Heart left ventricle (tissue), 16 donors: ENCODE measurements at regions of chr4 and their contacts with region 1.

Region 1: GRCh38 chr4:182938205-182938645 is 21.0 kb upstream of the DCTD start:
- DNase-seq: peak; percentile 63 to 85 (median 71)
- ATAC-seq: peak; percentile 86 to 99 (median 98)
- H3K4me3 ChIP-seq: no peak overlapping the region
- H3K27ac ChIP-seq: no peak overlapping the region
- H3K4me1 ChIP-seq: no peaks in the 10 kb centered on the region
- H3K27me3 ChIP-seq: no peaks in the 10 kb centered on the region
- CTCF ChIP-seq: peak; percentile 79 to 96 (median 92)
- POLR2A ChIP-seq: no peak

Region 2: GRCh38 chr4:183059797-183060196 is 121.6 kb after region 1 on chr4:
- intact Hi-C with region 1: loop called in 1 of 10 experiments (anchors 10 kb)
- DNase-seq: no peak
- ATAC-seq: no peak
- H3K4me3 ChIP-seq: no peak overlapping the region
- H3K27ac ChIP-seq: no peak overlapping the region
- H3K4me1 ChIP-seq: peaks cover 0 to 7% (median 0%) of the 10 kb centered on the region in 12 donors
- H3K27me3 ChIP-seq: no peaks in the 10 kb centered on the region
- CTCF ChIP-seq: no peak
- POLR2A ChIP-seq: no peak

Region 3: DNA sequence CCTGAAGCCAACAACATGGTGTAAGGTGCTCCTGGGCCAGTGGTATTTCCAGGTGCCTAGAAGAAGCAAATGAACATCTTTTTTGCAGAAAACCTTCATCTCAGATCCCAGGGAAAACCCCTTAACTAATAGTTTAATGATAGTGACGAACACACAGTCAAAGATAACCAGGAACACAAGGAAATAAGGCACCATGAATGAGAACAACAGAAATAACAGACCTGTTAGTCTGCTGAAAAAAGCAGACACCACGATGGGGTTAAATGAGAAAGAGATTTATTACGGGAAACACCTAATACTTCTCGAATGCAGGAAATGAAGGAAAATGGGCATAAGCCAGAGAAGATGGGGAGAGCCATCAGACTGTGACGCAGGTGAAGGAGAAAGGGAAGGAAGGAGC is 130.3 kb after region 1 on chr4:
- intact Hi-C with region 1: loop called in 9 of 10 experiments (anchors 1 to 10 kb)
- DNase-seq: no peak
- ATAC-seq: no peak
- H3K4me3 ChIP-seq: no peak overlapping the region
- H3K27ac ChIP-seq: no peak overlapping the region
- H3K4me1 ChIP-seq: peaks cover 0 to 10% (median 0%) of the 10 kb centered on the region in 12 donors
- H3K27me3 ChIP-seq: no peaks in the 10 kb centered on the region
- CTCF ChIP-seq: no peak
- POLR2A ChIP-seq: no peak

Region 4: DNA sequence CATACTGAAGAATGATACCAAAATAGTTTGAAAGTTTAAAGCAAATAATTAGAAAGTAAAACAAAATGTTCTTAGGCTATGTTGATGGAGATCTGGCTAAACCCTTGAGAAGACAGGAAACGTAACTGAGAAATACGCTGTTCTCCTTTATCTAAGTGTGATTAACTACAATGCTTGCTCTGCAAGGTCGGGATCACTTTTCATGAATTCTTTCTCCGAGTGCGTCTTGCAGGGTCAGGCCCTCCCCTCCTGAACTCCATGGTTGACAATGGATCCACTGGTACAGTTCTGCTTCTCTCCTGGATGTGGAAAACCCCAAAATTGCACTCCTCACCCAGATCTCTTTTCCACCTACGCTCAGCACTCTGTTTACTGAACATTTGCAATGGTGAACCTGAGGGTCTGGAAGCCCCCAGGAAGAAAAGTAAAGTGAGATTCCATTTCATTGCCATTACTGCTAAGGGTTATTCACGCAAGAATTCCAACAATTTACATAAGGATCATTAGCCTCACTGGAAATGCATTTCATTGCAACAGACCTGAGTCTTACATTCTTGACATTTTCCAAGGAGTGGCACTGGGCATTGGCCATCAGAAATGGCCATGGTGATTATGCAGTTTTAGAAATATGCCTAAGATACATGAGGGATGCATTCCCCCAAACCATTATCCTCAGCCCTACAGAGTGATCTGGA is 136.2 kb after region 1 on chr4:
- intact Hi-C with region 1: loop called in 9 of 10 experiments (anchors 1 to 10 kb)
- DNase-seq: no peak
- ATAC-seq: no peak
- H3K4me3 ChIP-seq: no peak overlapping the region
- H3K27ac ChIP-seq: no peak overlapping the region
- H3K4me1 ChIP-seq: peaks cover 0 to 8% (median 0%) of the 10 kb centered on the region in 12 donors
- H3K27me3 ChIP-seq: no peaks in the 10 kb centered on the region
- CTCF ChIP-seq: no peak
- POLR2A ChIP-seq: no peak

Region 5: GRCh38 chr4:183261953-183262775 is 323.9 kb after region 1 on chr4:
- intact Hi-C with region 1: loop called (anchors 1 to 5 kb)
- DNase-seq: peak; percentile 74 to 80 (median 77)
- ATAC-seq: peak; percentile 82 to 96 (median 93)
- H3K4me3 ChIP-seq: no peak overlapping the region
- H3K27ac ChIP-seq: peak overlapping the region in 6 of 12 donors; percentile 3 to 55 (median 36)
- H3K4me1 ChIP-seq: peaks cover 0 to 10% (median 4%) of the 10 kb centered on the region in 12 donors
- H3K27me3 ChIP-seq: no peaks in the 10 kb centered on the region
- CTCF ChIP-seq: peak; percentile 68 to 81 (median 72)
- POLR2A ChIP-seq: no peak